ENCODE measurements at regions of chr19 and their contacts with region 1.

Region 1: DNA sequence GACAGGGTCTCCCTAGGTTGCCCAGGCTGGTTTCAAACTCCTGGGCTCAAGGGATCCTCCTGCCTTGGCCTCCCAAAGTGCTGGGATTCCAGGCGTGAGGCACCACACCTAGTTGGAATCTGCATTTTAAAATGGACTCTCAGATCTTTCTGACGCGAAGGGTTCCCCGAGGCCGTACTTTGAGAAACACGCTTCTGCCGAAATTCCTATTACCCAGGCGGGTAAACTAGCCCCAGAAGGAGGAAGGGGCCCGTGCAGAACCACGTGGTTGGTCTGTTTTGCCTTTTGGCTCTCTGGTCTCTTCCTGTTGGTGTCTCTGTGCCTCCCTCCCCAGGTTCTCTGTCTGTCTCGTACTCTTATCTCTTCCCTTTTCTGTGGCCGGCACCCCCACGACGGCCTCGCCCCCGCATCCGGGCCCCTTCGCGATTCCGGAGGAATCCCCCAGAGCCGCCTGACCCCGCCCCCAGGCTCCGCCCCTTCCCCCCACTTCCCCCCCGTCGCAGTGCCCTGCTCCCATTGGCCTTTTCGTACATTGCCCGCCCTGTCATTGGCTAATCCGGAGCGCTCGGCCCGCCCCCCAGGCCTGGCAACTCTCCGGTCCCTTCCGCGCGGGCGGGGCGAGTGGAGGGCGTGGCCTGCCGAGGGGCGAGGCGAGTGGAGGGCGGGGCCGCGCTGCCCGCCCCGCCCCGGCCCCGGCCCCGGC is at the start of gene TNFAIP8L1:
- DNase-seq: peak; percentile 97
- ATAC-seq: peak; percentile 91
- H3K4me3 ChIP-seq: peak within 1 kb of the TSS; percentile 74 to 96 (median 93)
- H3K4me3 Mint-ChIP-seq: peak within 1 kb of the TSS; percentile 99
- H3K27ac ChIP-seq: peak within 1 kb of the TSS; percentile 86 to 88
- H3K27ac Mint-ChIP-seq: peak within 1 kb of the TSS; percentile 94
- H3K4me1 ChIP-seq: peaks cover 34 to 72% of the 10 kb centered on the region in 2 donors
- H3K4me1 Mint-ChIP-seq: peaks cover 40% of the 10 kb centered on the region
- H3K27me3 ChIP-seq: peaks cover 0 to 3% (median 0%) of the 10 kb centered on the region in 4 experiments
- H3K27me3 Mint-ChIP-seq: no peaks in the 10 kb centered on the region
- CTCF ChIP-seq: no peak
- total RNA-seq, gene TNFAIP8L1: 20.9 and 21.7 TPM in 2 replicates

Region 2: DNA sequence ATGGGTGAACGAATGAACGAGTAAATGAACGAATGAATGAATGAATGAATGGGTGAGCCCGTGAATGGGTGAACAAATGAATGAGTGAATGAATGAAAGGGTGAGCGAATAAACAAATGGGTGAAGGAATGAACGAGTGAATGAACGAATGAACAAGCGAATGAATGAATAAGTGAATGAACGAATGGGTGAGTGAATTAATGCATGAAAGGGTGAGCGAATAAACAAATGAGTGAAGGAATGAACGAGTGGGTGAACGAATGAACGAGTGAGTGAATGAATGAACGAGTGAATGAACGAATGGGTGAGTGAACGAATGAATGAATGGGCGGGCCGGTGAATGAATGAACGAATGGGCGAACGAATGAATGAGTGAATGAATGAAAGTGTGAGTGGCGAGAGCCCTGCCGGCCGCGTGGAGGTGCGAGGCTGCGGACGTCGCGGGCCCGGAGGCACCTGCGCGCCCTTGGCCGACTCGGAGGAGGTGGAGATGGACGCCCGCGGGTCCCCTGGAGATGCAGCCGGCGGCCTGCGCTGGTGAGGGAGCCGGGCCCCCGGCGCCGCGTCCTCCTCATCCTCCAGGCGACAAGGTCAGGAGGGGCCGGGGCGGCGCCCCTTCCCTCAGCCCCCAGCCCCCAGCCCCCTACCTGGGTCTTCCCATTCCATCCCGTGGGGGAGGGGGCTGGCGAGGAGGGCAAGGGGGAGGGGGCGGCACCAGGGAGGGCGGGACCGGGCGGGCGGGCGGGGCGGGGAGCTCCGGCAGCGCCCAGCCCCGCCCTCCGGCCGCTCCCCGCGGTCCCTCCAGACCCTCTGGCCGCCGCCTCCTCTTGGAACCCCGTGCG is 441.1 kb before region 1 on chr19:
- CTCF ChIA-PET with region 1: no interaction called
- POLR2A ChIA-PET with region 1: no interaction called
- intact Hi-C with region 1: no loop called
- DNase-seq: no peak
- ATAC-seq: no peak
- H3K4me3 ChIP-seq: no peak overlapping the region
- H3K4me3 Mint-ChIP-seq: no peak overlapping the region
- H3K27ac ChIP-seq: no peak overlapping the region
- H3K27ac Mint-ChIP-seq: no peak overlapping the region
- H3K4me1 ChIP-seq: peaks cover 6 to 13% of the 10 kb centered on the region in 2 donors
- H3K4me1 Mint-ChIP-seq: peaks cover 15% of the 10 kb centered on the region
- H3K27me3 ChIP-seq: peaks cover 2 to 52% (median 24%) of the 10 kb centered on the region in 4 experiments
- H3K27me3 Mint-ChIP-seq: peaks cover 38% of the 10 kb centered on the region
- CTCF ChIP-seq: no peak

Region 3: GRCh38 chr19:4246767-4247593 is 392.0 kb before region 1 on chr19 and contains the start of gene YJU2:
- CTCF ChIA-PET with region 1: no interaction called
- POLR2A ChIA-PET with region 1: no interaction called
- intact Hi-C with region 1: loop called (anchors 5 kb)
- DNase-seq: peak; percentile 99
- ATAC-seq: peak; percentile 94
- H3K4me3 ChIP-seq: peak within 1 kb of the TSS; percentile 86 to 99 (median 98)
- H3K4me3 Mint-ChIP-seq: peak within 1 kb of the TSS; percentile 91
- H3K27ac ChIP-seq: peak within 1 kb of the TSS; percentile 99 to 100
- H3K27ac Mint-ChIP-seq: peak within 1 kb of the TSS; percentile 95
- H3K4me1 ChIP-seq: peaks cover 12 to 24% of the 10 kb centered on the region in 2 donors
- H3K4me1 Mint-ChIP-seq: peaks cover 23% of the 10 kb centered on the region
- H3K27me3 ChIP-seq: no peaks in the 10 kb centered on the region
- H3K27me3 Mint-ChIP-seq: no peaks in the 10 kb centered on the region
- CTCF ChIP-seq: peak; percentile 40
- total RNA-seq, gene YJU2: 39.8 and 40.3 TPM in 2 replicates

Region 4: DNA sequence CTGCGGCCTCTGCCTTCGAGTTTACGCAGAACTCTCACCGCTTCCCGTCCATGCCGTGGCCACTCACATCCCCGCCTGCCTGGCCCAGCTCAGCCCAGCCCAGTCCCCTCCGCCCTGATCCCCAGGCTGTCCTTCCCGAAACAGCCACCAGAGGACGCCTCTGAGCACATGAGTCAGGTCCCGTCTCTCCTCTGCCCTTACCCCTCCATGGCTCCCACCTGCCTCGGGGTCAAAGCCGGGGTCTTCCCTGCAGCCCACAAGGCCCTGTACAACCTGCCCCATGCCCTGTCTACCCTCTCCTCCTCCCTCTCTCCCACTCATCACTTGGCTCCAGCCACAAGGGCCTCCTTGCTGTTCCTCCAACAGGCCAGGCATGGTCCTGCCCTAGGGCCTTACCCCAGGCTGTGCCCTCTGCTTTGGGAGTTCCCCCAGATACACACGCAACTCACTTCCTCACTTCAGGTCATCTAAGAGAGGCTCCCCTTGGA is 71.4 kb before region 1 on chr19:
- CTCF ChIA-PET with region 1: interaction called, 24 read pairs
- POLR2A ChIA-PET with region 1: interaction called, 10 read pairs
- intact Hi-C with region 1: loop called (anchors 2 kb)
- DNase-seq: peak; percentile 53
- ATAC-seq: peak; percentile 43
- H3K4me3 ChIP-seq: no peak overlapping the region
- H3K4me3 Mint-ChIP-seq: no peak overlapping the region
- H3K27ac ChIP-seq: no peak overlapping the region
- H3K27ac Mint-ChIP-seq: no peak overlapping the region
- H3K4me1 ChIP-seq: no peaks in the 10 kb centered on the region
- H3K4me1 Mint-ChIP-seq: no peaks in the 10 kb centered on the region
- H3K27me3 ChIP-seq: peaks cover 0 to 8% (median 0%) of the 10 kb centered on the region in 4 experiments
- H3K27me3 Mint-ChIP-seq: peaks cover 9% of the 10 kb centered on the region
- CTCF ChIP-seq: peak; percentile 51

Region 5: GRCh38 chr19:4589579-4590410 is 49.2 kb before region 1 on chr19:
- CTCF ChIA-PET with region 1: interaction called, 12 read pairs
- POLR2A ChIA-PET with region 1: no interaction called
- intact Hi-C with region 1: no loop called
- DNase-seq: peak; percentile 43
- ATAC-seq: peak; percentile 47
- H3K4me3 ChIP-seq: no peak overlapping the region
- H3K4me3 Mint-ChIP-seq: no peak overlapping the region
- H3K27ac ChIP-seq: no peak overlapping the region
- H3K27ac Mint-ChIP-seq: no peak overlapping the region
- H3K4me1 ChIP-seq: peaks cover 2% of the 10 kb centered on the region in 2 donors
- H3K4me1 Mint-ChIP-seq: peaks cover 4% of the 10 kb centered on the region
- H3K27me3 ChIP-seq: peaks cover 0 to 42% (median 24%) of the 10 kb centered on the region in 4 experiments
- H3K27me3 Mint-ChIP-seq: peaks cover 53% of the 10 kb centered on the region
- CTCF ChIP-seq: peak; percentile 47

Region 6: GRCh38 chr19:4669723-4670480 is 30.9 kb after region 1 on chr19 and contains the start of gene MYDGF:
- CTCF ChIA-PET with region 1: interaction called, 4 read pairs
- POLR2A ChIA-PET with region 1: no interaction called
- intact Hi-C with region 1: loop called (anchors 1 kb)
- DNase-seq: peak; percentile 93
- ATAC-seq: peak; percentile 98
- H3K4me3 ChIP-seq: peak within 1 kb of the TSS; percentile 33 to 84 (median 79)
- H3K4me3 Mint-ChIP-seq: peak within 1 kb of the TSS; percentile 88
- H3K27ac ChIP-seq: peak within 1 kb of the TSS; percentile 6 to 87
- H3K27ac Mint-ChIP-seq: peak within 1 kb of the TSS; percentile 78
- H3K4me1 ChIP-seq: peaks cover 10 to 18% of the 10 kb centered on the region in 2 donors
- H3K4me1 Mint-ChIP-seq: peaks cover 20% of the 10 kb centered on the region
- H3K27me3 ChIP-seq: no peaks in the 10 kb centered on the region
- H3K27me3 Mint-ChIP-seq: no peaks in the 10 kb centered on the region
- CTCF ChIP-seq: no peak
- total RNA-seq, gene MYDGF: 18.1 and 21.2 TPM in 2 replicates

Region 7: DNA sequence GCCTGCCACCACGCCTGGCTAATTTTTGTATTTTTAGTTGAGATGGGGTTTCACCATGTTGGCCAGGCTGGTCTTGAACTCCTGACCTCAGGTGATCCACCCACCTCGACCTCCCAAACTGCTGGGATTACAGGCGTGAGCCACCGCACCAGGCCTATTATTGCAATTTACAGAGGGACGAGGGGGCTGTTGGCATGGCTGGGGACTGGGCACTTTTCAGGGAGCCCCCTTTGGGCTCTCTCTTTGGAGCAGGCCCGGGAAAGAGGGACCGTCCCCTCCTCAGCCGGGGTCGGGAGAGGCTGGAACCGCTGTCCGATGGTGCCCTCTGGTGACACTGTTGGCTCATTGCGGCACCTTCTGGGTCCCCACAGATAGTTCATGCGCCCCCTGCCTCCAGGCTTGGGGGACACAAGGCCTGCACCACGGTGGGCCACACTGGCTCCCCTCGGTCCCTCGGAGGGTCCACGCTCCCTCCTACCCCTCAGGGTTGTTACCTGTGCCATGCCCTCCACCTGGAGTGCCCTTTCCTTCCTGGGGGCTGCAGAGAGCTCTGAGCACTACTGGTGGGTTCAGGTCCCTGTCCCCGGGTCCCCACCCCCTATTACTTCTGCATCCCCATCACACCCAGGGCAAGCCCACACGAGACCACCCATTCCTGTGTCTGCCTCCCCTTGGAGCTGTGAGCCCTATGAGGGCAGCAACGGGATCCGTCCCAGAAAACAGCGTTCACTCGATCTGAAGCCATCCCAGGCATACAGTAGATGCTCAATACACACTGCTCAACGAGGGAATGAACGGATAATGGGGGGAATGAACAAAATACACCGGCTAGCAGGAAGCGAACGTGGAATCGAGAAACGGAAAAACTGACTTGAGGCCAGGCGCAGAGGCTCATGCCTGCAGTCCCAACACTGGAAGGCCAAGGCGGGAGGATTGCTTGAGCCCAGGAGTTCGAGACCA is 165.0 kb after region 1 on chr19:
- CTCF ChIA-PET with region 1: no interaction called
- POLR2A ChIA-PET with region 1: no interaction called
- intact Hi-C with region 1: no loop called
- DNase-seq: peak; percentile 80
- ATAC-seq: peak; percentile 94
- H3K4me3 ChIP-seq: no peak overlapping the region
- H3K4me3 Mint-ChIP-seq: no peak overlapping the region
- H3K27ac ChIP-seq: no peak overlapping the region
- H3K27ac Mint-ChIP-seq: no peak overlapping the region
- H3K4me1 ChIP-seq: peaks cover 4 to 11% of the 10 kb centered on the region in 2 donors
- H3K4me1 Mint-ChIP-seq: peaks cover 15% of the 10 kb centered on the region
- H3K27me3 ChIP-seq: no peaks in the 10 kb centered on the region
- H3K27me3 Mint-ChIP-seq: no peaks in the 10 kb centered on the region
- CTCF ChIP-seq: peak; percentile 82